Gastrocnemius medialis (tissue), 4 donors: ENCODE measurements at regions of chr13 and their contacts with region 1.

Region 1: GRCh38 chr13:102617697-102618350 is 21.0 kb downstream of the TPP2 start:
- DNase-seq: peak; percentile 57 to 73
- ATAC-seq: peak; percentile 100
- H3K4me3 ChIP-seq: peak overlapping the region in 1 of 4 donors; percentile 12
- H3K27ac ChIP-seq: peak overlapping the region; percentile 71 to 85 (median 82)
- H3K4me1 ChIP-seq: peaks cover 14 to 29% of the 10 kb centered on the region in 2 donors
- H3K27me3 ChIP-seq: no peaks in the 10 kb centered on the region
- CTCF ChIP-seq: no peak
- POLR2A ChIP-seq: no peak

Region 2: DNA sequence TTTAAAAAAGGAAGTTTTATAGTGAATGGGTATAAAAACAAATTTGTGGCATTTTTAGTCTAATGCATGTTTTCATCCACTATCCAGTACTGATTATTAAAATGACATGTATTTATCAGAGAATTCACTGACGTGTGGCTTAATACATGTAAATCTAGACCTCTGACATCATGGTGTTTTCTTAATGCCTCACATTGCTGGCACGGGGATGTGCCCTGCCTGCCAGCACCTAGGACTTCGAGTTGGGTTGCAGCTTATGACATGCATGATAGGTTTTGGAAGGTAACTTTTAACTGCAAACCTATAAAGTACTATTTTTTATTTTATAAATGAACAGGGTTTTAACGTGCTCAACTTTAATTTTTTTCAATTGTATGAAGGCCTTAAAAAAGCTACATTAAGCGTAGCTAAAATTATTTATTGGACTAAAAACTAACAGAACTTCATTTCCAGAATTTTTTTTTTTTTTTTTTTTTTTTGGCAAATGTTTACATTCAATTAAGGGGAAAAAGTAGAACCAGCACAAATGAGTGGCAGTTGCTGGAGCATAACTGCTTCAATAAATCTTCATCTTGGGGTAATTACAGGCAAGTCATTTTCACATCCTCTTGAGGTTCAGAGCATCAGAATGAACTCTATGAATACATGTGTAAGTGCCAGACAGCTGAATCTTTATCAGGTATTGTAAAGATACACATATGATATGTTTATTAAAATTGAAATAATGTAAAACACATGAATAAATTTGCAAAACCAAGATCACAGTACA is 60.7 kb after region 1 on chr13:
- in situ Hi-C with region 1: no loop called
- intact Hi-C with region 1: loop called (anchors 5 kb)
- DNase-seq: peak in 1 of 2 donors; percentile 64
- ATAC-seq: peak; percentile 60 to 62
- H3K4me3 ChIP-seq: no peak overlapping the region
- H3K27ac ChIP-seq: peak overlapping the region; percentile 67 to 80 (median 68)
- H3K4me1 ChIP-seq: peaks cover 32 to 37% of the 10 kb centered on the region in 2 donors
- H3K27me3 ChIP-seq: no peaks in the 10 kb centered on the region
- CTCF ChIP-seq: no peak
- POLR2A ChIP-seq: no peak

Region 3: DNA sequence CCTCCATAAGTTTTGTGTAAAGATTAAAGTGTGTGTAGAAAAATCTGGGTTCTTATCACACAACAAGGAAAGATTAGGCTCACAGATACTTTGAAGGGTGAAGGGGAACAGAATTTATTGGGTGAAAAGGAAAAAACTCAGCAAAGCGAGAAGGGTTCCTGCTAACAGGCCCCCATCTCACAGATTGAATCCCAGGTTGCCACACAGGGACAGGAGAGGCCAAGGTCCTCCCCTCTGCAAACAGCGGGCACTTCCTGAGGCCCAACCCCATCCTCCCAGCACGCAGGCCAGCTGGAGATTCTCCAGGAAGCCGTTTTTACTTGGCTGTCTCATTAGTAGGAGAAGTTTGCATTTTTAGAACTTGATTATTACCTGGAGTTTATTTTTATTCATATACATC is 212.8 kb after region 1 on chr13:
- in situ Hi-C with region 1: no loop called
- intact Hi-C with region 1: no loop called
- DNase-seq: no peak
- ATAC-seq: no peak
- H3K4me3 ChIP-seq: no peak overlapping the region
- H3K27ac ChIP-seq: no peak overlapping the region
- H3K4me1 ChIP-seq: no peaks in the 10 kb centered on the region
- H3K27me3 ChIP-seq: no peaks in the 10 kb centered on the region
- CTCF ChIP-seq: no peak
- POLR2A ChIP-seq: no peak